Sigmoid colon (tissue), 7 donors: ENCODE measurements at regions of chr18 and their contacts with region 1.

Region 1: GRCh38 chr18:22348521-22349316 is 69.0 kb downstream of the CTAGE1 start:
- DNase-seq: no peak
- H3K4me3 ChIP-seq: peak overlapping the region; percentile 23 to 58 (median 51)
- H3K27ac ChIP-seq: peak overlapping the region; percentile 45 to 79 (median 59)
- H3K4me1 ChIP-seq: peaks cover 0 to 28% (median 23%) of the 10 kb centered on the region in 4 donors
- H3K27me3 ChIP-seq: peaks cover 0 to 7% (median 0%) of the 10 kb centered on the region in 3 donors
- CTCF ChIP-seq: no peak
- EP300 ChIP-seq: no peak
- POLR2A ChIP-seq: no peak

Region 2: DNA sequence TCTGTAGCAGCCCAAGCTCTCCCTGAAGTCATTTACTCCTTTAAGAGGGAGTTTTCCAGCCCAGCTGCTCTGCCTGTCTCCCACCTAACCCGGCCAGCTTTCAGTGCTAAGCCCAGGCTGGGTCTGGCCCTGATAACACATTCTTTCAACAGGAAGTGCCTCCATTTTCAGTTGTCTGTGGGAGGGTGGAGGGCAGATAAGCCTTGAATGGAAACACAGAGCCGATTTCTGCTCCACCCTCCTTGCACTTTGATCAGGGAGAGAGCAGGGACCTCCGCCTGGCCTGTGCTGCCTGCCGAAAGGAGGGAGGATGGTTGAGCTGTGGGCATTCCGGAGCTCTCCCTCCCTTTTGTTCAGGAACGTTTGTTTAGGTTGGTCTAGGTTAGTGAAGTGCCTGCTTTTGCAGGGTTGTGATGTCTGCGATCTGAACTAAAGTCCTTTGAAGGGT is 154.5 kb before region 1 on chr18:
- intact Hi-C with region 1: loop called (anchors 10 kb)
- DNase-seq: no peak
- H3K4me3 ChIP-seq: peak overlapping the region in 2 of 4 donors; percentile 7 to 27
- H3K27ac ChIP-seq: peak overlapping the region; percentile 52 to 83 (median 70)
- H3K4me1 ChIP-seq: peaks cover 0 to 45% (median 30%) of the 10 kb centered on the region in 4 donors
- H3K27me3 ChIP-seq: no peaks in the 10 kb centered on the region
- CTCF ChIP-seq: no peak
- EP300 ChIP-seq: no peak
- POLR2A ChIP-seq: no peak